ENCODE measurements at regions of chr4 and their contacts with region 1.

Region 1: GRCh38 chr4:142901166-142901662 is 55.1 kb upstream of the INPP4B start:
- DNase-seq: no peak
- CTCF ChIP-seq: no peak

Region 2: DNA sequence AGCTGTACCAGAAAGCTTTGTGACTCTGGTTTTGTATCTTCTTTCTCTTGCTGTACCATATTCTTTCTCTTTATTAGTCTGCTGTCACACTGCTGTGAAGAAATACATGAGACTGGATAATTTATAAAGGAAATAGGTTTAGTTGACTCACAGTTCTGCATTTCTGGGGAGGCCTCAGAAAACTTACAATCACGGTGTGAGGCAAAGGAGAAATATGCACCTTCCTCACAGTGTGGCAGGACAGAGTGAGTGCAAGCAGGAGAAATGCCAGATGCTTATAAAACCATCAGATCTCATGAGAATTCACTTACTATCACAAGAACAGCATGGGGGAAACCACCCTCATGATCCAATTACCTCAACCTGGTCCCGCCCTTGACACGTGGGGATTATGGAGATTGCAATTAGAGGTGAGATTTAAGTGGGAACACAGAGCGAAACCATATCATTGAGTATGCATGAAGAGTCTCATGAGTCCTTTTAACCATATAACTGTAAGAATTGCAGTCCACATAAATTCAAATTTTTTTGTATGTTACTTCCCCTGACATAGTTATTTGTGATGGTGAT is 12.3 kb after region 1 on chr4:
- CTCF ChIA-PET with region 1: interaction called, 10 read pairs
- POLR2A ChIA-PET with region 1: no interaction called
- DNase-seq: no peak
- CTCF ChIP-seq: no peak

Region 3: DNA sequence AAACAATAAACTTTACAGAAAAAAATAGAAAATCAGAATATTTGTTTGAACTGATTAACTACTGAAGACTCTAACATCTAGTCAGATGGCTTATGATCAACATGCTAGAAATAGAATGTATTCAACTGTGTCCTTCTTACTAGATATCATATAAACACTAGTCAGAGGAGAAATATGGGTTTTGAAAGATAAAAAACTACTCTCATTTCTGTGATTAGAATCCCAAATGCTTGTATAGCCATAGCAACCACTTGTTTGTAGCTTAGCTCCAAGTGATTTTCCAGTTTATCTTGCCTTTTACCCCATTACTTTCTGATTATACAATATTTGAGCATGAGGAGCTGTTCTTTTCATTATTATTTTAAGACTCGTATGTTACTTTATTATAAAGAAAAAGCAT is 314.7 kb after region 1 on chr4:
- CTCF ChIA-PET with region 1: no interaction called
- POLR2A ChIA-PET with region 1: no interaction called
- DNase-seq: no peak
- CTCF ChIP-seq: no peak

Region 4: DNA sequence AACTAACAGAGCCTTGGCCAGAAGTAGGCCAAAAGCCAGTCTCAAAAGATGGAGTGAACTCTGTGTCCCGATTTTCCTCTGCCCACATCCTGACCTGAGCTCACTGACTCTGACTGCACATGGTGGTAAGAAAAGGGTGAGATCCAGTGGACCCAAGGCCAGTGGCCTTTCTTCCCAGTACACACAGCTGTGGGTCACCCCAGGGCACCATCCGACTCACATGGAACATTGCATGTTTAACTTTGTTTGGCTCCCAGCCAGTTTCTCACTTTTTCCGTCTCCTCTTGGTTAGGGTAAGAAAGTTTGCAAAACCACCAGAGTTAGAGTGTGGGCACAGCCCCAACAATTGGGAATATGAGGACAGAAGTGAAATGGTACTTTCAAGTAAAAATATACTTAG is 505.3 kb after region 1 on chr4:
- CTCF ChIA-PET with region 1: no interaction called
- POLR2A ChIA-PET with region 1: no interaction called
- DNase-seq: no peak
- CTCF ChIP-seq: no peak

Measured in GM10248 (cell line).